Activated CD4-positive, alpha-beta memory T cell treated with anti-CD3 and anti-CD28 coated beads, Interleukin-2, amount 10 ng/mL, durations not matched to agents 7 days and 5 days (primary cell): ENCODE measurements at regions of chr11 and their contacts with region 1.

Region 1: DNA sequence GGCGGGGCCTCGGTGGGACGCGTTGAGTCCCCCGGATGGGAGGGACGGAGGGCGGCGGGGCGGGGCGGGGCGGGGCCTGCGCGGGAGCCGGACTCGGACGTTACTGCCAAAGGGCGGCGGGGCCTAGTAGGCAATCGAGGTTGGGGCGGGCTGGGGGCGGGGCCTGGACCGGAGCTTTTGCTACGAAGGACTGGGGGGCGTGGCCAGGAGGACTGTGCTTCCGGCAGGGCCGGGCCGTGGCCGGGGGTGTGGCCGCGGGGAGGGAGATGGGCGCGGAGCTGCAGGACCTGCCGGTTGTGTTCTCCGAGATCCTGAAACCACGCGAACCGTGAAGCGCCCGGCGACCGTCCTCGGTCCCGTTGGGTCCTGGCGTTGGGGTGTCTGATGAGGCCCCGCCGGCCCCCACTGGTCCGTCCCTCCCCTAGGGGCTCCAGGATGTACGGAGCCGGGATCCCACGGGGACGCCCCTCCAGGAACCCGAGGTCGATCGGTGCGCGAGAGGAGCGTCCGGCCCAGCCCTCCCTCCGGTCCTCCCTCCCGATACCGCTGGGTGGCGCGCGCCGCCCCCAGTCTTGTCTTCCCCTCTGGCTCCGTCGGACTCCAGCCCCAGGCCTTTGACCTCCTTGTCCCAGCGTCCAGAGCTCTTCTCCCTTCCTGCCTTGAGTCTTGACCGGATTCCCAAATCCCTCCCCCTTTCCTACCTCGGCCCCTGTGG is 648 bp upstream of the NUDT8 start:
- DNase-seq: peak; percentile 98
- H3K4me3 Mint-ChIP-seq: peak overlapping the region; percentile 82
- H3K27ac Mint-ChIP-seq: peak overlapping the region; percentile 93
- H3K4me1 Mint-ChIP-seq: peaks cover 23% of the 10 kb centered on the region
- H3K27me3 Mint-ChIP-seq: no peaks in the 10 kb centered on the region

Region 2: DNA sequence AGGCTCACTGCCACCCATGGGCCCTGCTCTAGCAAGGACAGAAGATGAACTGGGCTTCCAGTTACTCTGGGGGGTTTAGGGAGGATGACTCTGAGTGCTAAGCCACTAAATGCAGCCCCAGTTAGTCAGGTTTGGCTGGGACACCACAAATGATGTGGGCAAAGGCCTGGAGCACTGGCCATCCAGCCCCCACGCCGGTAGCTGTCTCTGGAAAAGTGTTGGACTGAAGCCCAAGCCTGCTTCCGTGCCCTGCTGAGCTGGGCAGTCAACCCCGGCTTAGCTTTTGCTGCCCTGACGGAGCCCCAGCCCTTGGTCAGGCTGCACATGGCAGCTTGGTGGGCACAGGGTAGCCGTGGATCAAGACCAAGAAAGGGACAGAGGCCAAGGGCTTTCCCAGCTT is 52.4 kb before region 1 on chr11:
- CTCF ChIA-PET with region 1: no interaction called
- POLR2A ChIA-PET with region 1: no interaction called
- DNase-seq: no peak
- H3K4me3 Mint-ChIP-seq: no peak overlapping the region
- H3K27ac Mint-ChIP-seq: no peak overlapping the region
- H3K4me1 Mint-ChIP-seq: peaks cover 26% of the 10 kb centered on the region
- H3K27me3 Mint-ChIP-seq: peaks cover 36% of the 10 kb centered on the region

Region 3: DNA sequence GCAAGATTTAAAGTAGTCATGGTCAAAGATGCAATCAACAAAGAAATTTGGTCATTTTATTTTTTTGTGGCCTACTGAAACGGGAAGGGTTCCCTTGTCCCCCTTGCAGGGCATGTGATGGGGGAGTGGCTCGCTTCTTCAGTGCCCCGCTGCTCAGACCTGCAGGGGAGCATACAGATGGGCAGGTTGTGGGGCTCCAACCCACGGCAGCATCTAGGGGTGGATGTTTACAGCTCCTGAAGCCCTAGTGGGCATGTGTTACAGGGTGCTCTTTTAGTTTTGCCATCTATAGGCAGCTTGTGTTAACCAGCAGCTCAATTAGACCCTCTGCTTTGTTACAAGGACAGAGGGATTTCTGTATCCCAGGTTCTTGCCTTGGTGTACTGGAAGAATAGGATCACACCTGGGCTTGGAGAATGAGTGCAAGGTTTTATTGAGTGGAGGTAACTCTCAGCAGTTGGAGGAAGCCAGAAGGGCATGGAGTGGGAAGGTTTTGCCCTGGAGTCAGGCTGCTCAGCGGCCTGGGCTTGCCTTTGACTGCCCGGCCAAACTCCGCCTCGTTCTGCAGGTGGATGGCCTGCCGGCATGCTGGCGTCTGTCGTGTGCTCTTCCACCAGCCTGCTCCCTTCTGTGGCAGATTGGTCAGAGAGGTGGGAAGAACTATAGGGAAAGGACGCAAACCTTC is 37.4 kb before region 1 on chr11:
- CTCF ChIA-PET with region 1: no interaction called
- POLR2A ChIA-PET with region 1: no interaction called
- DNase-seq: no peak
- H3K4me3 Mint-ChIP-seq: no peak overlapping the region
- H3K27ac Mint-ChIP-seq: no peak overlapping the region
- H3K4me1 Mint-ChIP-seq: no peaks in the 10 kb centered on the region
- H3K27me3 Mint-ChIP-seq: peaks cover 4% of the 10 kb centered on the region

Region 4: DNA sequence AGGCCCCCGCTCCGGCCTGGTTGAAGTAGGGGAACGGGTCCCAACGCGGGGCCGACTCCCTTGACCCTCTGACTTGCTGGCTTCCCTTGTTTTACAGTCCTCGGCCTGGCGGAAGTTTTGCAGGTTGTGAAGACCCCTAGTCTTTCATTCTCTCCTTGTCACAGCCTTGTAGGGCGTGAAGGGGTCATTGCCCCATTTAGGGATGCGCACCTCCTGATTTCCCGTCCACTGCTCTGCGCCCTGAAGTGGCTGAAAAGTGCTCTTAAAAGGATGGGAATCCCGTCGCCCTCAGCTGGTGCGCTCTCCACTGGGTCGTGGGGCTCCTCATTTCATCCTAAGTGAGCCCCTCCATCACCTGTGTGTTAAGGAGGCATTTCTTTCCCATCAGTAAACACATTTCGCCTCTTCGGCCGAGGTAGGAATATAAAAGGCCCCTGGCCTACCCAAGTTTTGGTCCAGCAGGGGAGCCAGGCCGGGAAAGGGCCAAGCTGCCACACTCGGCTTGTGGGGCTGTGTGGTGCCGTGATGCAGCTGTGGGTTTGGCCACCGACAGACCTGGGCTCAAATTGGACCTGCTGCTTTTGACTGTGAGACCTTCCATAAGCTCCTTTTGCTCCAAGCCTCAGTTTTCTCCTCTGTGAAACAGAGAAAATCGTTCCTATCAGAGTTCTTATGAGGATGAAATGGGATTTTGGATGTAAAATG is 23.0 kb before region 1 on chr11:
- CTCF ChIA-PET with region 1: interaction called, 57 read pairs
- POLR2A ChIA-PET with region 1: interaction called, 38 read pairs
- DNase-seq: no peak
- H3K4me3 Mint-ChIP-seq: peak overlapping the region; percentile 81
- H3K27ac Mint-ChIP-seq: peak overlapping the region; percentile 79
- H3K4me1 Mint-ChIP-seq: peaks cover 23% of the 10 kb centered on the region
- H3K27me3 Mint-ChIP-seq: peaks cover 6% of the 10 kb centered on the region

Region 5: DNA sequence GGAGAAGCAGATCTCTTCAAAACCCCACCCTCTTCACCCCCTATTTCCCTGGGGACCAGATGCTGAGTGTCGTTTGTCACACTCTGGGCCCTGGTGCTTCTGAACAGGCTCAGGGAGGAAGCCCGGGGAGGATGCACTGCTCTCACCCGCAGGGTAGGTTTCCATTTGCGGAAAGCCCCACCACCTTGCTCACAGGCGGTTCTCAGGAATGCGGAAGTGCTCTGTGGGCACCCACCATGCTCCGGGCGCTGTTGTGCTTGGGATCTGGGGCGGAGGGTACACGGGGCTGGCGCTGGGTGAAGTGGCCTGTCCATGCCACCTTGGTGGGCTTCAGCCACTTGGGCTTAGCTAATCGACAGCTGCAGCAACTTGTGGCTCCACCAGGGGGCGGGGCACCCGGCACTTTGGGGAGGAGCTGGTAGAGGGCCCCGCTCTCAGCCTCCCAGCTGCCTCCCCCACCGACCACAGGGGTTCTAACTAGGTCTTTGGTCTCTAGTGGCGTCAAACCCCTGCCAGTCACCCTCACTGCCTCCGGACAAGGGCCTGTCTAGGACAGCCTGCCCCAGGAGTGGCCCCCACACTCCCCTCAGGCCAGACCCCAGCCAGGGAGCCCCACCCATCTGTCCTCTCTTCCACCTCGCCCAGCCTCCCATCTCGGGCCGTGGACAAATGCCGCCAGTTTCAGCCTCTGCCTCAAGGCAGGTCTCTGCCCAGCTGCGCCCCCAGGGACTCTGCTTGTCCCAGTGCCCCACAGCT is 16.2 kb before region 1 on chr11:
- CTCF ChIA-PET with region 1: interaction called, 57 read pairs
- POLR2A ChIA-PET with region 1: interaction called, 38 read pairs
- DNase-seq: peak; percentile 90
- H3K4me3 Mint-ChIP-seq: peak overlapping the region; percentile 71
- H3K27ac Mint-ChIP-seq: peak overlapping the region; percentile 96
- H3K4me1 Mint-ChIP-seq: peaks cover 36% of the 10 kb centered on the region
- H3K27me3 Mint-ChIP-seq: peaks cover 3% of the 10 kb centered on the region

Region 6: DNA sequence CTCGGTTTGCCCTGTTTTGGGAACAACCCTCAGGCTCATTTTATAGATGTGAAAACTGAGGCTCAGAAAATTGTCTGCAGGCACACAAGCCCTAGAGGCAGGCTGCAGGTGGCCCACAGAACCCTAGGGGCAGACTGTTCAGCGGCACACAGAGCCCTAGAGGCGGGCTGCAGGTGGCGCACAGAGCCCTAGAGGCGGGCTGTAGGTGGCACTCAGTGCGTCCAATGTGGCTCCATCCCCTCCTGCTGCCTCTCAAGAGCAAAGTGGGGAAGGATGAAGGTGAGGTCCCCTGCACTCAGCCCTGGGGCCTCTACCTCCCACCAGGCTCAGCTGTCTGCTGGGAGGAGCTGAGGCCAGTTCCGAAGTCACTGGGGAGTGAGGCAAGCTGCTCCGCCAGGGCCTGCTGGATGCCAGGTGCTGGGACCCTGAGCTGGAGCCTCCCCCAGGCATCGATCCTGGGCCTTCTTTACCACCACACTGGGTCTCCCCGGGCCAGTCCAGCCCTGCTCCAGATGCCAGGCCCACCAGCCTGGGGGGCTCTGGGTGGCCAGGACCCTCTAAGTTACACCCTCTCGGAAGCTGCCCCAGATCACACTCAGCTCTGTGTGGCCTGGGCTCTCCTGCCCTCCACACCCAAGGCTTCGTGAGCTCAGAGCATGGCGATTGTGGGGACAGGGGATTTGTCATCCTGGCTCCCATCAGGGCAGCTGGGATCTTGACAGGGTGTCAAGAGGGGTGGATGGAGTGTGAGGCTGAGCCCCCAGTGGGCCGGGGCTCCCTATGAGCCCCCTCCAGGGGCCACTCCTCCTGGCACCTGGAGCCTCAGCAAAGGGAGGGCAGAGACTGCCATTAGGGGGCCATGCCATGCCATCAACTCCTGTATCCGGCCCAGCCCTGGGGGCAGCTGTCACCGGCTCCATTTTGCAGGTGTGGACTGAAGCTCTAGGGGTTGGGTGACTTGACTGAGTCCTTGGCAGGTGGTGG is 18.0 kb after region 1 on chr11:
- CTCF ChIA-PET with region 1: interaction called, 25 read pairs
- POLR2A ChIA-PET with region 1: interaction called, 17 read pairs
- DNase-seq: peak; percentile 60
- H3K4me3 Mint-ChIP-seq: no peak overlapping the region
- H3K27ac Mint-ChIP-seq: no peak overlapping the region
- H3K4me1 Mint-ChIP-seq: peaks cover 45% of the 10 kb centered on the region
- H3K27me3 Mint-ChIP-seq: peaks cover 10% of the 10 kb centered on the region

Region 7: DNA sequence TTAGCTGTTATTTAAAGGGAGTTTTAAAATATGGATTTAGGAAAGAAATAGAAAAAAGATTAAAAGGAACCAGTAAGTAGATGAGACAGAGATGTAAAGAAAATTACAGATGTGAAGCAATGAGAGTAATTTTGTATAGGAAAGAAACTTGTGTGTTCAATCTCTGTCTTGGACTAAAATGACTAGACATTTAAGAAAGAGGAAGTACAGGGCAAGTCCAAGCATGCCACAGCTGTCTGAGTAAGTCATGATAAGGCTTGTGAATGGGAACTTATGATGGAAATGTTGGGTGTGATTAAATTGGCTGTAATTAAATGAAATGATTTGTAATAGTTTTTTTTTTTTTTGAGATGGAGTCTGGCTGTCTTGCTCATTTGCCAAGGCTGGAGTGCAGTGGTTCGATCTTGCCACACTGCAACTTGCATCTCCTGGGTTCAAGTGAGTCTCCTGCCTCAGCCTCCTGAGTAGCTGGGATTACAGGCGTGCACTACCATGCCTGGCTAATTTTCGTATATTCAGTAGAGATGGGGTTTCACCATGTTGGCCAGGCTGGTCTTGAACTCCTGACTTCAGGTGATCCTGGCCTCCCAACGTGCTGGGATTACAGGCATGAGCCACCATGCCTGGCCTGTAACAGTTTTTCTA is 26.0 kb after region 1 on chr11:
- CTCF ChIA-PET with region 1: interaction called, 56 read pairs
- POLR2A ChIA-PET with region 1: interaction called, 15 read pairs
- DNase-seq: no peak
- H3K4me3 Mint-ChIP-seq: no peak overlapping the region
- H3K27ac Mint-ChIP-seq: no peak overlapping the region
- H3K4me1 Mint-ChIP-seq: peaks cover 12% of the 10 kb centered on the region
- H3K27me3 Mint-ChIP-seq: peaks cover 14% of the 10 kb centered on the region